Activated CD4-positive, alpha-beta memory T cell treated with anti-CD3 and anti-CD28 coated beads for 36 hours (primary cell): ENCODE measurements at regions of chr3 and their contacts with region 1.

Region 1: GRCh38 chr3:98522244-98523090 is at the start of gene CLDND1:
- DNase-seq: peak; percentile 98
- H3K4me3 Mint-ChIP-seq: peak within 1 kb of the TSS; percentile 91
- H3K27ac Mint-ChIP-seq: peak within 1 kb of the TSS; percentile 86
- H3K4me1 Mint-ChIP-seq: peaks cover 66% of the 10 kb centered on the region
- H3K27me3 Mint-ChIP-seq: no peaks in the 10 kb centered on the region
- total RNA-seq, gene CLDND1: 199 to 208 TPM

Region 2: DNA sequence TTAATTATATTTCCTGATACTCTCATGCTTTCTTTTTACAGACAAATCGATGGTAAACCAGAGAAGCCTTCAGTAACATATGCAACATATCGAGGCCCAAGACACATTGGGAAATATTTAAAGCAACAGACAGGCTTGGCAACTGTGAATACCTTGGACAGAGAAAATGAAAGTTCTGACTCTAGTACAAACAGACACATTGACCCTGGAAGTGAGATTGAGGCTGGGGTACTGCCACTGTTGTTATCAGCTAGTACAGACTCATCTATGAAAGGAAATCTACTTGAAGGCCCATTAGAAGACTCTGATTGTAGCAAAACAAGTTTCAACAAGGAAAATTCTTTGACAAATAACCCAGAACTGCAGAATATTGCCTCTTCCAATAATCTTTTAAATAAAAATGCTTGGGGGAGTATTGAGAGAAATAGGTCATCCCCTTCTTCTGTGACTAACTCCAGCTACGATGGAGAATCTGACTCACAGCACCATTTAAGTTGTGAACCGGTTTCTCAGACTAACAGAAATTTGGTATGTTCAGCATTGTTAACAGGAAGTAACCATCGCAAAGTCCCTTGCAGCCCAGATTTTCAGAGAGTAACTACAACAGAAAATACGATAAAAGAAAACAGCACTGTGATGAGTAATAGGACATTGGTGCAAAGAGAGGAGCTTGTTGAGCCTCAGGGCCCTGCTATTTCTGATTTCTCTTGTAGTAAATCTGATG is 650.5 kb before region 1 on chr3:
- CTCF ChIA-PET with region 1: no interaction called
- POLR2A ChIA-PET with region 1: no interaction called
- intact Hi-C with region 1: loop called (anchors 10 kb)
- DNase-seq: peak; percentile 41
- H3K4me3 Mint-ChIP-seq: peak overlapping the region; percentile 14
- H3K27ac Mint-ChIP-seq: peak overlapping the region; percentile 81
- H3K4me1 Mint-ChIP-seq: peaks cover 25% of the 10 kb centered on the region
- H3K27me3 Mint-ChIP-seq: no peaks in the 10 kb centered on the region

Region 3: DNA sequence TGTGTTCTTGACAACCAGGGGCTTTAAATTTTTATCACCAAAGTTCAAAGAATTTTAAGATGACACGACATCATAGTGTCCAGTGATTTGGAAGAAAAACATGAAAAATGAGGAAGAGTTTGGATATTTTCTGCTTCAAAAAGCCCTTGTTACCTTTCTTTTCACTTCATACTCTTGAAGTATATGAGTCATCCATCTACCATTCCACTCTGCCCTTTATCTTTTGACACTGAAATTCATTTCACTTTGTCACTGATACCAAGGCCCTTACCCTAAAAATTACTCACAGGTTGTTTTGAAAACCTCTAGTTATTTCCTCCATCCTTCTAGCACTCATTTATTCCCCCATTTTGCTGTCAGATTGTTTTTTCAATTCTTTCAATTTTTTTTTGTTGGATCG is 313.2 kb before region 1 on chr3:
- CTCF ChIA-PET with region 1: no interaction called
- POLR2A ChIA-PET with region 1: no interaction called
- intact Hi-C with region 1: no loop called
- DNase-seq: no peak
- H3K4me3 Mint-ChIP-seq: no peak overlapping the region
- H3K27ac Mint-ChIP-seq: no peak overlapping the region
- H3K4me1 Mint-ChIP-seq: no peaks in the 10 kb centered on the region
- H3K27me3 Mint-ChIP-seq: no peaks in the 10 kb centered on the region

Region 4: GRCh38 chr3:98500039-98500438 is 22.4 kb before region 1 on chr3:
- CTCF ChIA-PET with region 1: no interaction called
- POLR2A ChIA-PET with region 1: no interaction called
- intact Hi-C with region 1: no loop called
- DNase-seq: no peak
- H3K4me3 Mint-ChIP-seq: no peak overlapping the region
- H3K27ac Mint-ChIP-seq: no peak overlapping the region
- H3K4me1 Mint-ChIP-seq: peaks cover 11% of the 10 kb centered on the region
- H3K27me3 Mint-ChIP-seq: no peaks in the 10 kb centered on the region

Region 5: GRCh38 chr3:98540346-98540745 is 17.9 kb after region 1 on chr3:
- CTCF ChIA-PET with region 1: interaction called, 11 read pairs
- POLR2A ChIA-PET with region 1: interaction called, 21 read pairs
- intact Hi-C with region 1: loop called (anchors 1 kb)
- DNase-seq: no peak
- H3K4me3 Mint-ChIP-seq: no peak overlapping the region
- H3K27ac Mint-ChIP-seq: peak overlapping the region; percentile 69
- H3K4me1 Mint-ChIP-seq: peaks cover 57% of the 10 kb centered on the region
- H3K27me3 Mint-ChIP-seq: no peaks in the 10 kb centered on the region

Region 6: GRCh38 chr3:98573181-98573728 is 50.8 kb after region 1 on chr3:
- CTCF ChIA-PET with region 1: interaction called, 7 read pairs
- POLR2A ChIA-PET with region 1: no interaction called
- intact Hi-C with region 1: loop called (anchors 1 kb)
- DNase-seq: no peak
- H3K4me3 Mint-ChIP-seq: no peak overlapping the region
- H3K27ac Mint-ChIP-seq: peak overlapping the region; percentile 66
- H3K4me1 Mint-ChIP-seq: peaks cover 54% of the 10 kb centered on the region
- H3K27me3 Mint-ChIP-seq: no peaks in the 10 kb centered on the region

Region 7: GRCh38 chr3:98670020-98670419 is 147.6 kb after region 1 on chr3:
- CTCF ChIA-PET with region 1: no interaction called
- POLR2A ChIA-PET with region 1: no interaction called
- intact Hi-C with region 1: no loop called
- DNase-seq: no peak
- H3K4me3 Mint-ChIP-seq: no peak overlapping the region
- H3K27ac Mint-ChIP-seq: no peak overlapping the region
- H3K4me1 Mint-ChIP-seq: no peaks in the 10 kb centered on the region
- H3K27me3 Mint-ChIP-seq: peaks cover 1% of the 10 kb centered on the region

Region 8: GRCh38 chr3:98961161-98962155 is 439.0 kb after region 1 on chr3:
- CTCF ChIA-PET with region 1: no interaction called
- POLR2A ChIA-PET with region 1: no interaction called
- intact Hi-C with region 1: no loop called
- DNase-seq: no peak
- H3K4me3 Mint-ChIP-seq: no peak overlapping the region
- H3K27ac Mint-ChIP-seq: no peak overlapping the region
- H3K4me1 Mint-ChIP-seq: no peaks in the 10 kb centered on the region
- H3K27me3 Mint-ChIP-seq: peaks cover 1% of the 10 kb centered on the region